MCF 10A (cell line): ENCODE measurements at regions of chr17 and their contacts with region 1.

Region 1: DNA sequence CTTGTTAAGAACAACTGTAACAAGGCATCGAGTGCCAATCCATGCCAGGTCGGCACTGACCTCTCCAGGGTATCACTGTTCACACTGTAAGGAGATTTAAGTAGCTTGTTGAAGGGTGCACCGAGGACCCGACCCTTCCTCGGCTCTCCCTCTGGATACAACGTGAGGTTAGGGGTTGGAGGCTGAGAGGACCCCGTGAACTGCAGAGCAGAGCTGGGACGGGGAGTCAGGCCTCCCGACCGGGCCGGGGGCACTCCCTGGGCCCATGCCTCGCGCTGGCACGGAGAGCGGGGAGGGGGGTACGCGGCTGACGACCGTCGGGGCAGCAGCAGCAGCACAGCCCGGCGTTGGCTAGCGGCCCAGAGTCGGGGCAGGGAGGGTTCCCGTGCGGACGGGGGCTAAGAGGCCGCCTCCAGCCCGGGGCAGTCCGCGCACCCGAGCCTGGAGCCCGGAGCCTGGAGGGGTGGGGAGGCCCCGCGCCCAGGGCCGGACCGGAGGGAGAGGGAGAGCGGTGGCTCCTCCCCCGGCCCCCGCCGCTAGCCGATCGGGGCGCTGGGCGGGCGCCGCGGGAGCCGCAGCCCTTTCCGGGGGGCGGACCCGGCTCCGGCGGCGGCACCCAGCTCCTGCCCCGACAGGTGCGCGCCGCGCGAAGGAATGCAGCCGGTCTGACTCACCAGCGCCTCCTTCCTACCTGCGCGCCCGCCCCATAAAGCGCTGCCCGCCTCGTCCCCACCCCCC is at the start of gene ITGB4:
- DNase-seq: peak; percentile 85
- H3K4me3 Mint-ChIP-seq: peak within 1 kb of the TSS; percentile 87
- H3K27ac Mint-ChIP-seq: peak within 1 kb of the TSS; percentile 78
- H3K4me1 Mint-ChIP-seq: peaks cover 6% of the 10 kb centered on the region
- H3K27me3 Mint-ChIP-seq: no peaks in the 10 kb centered on the region
- CTCF ChIP-seq: no peak
- total RNA-seq, gene ITGB4: 727 and 1,054 TPM in 2 replicates

Region 2: GRCh38 chr17:75679706-75680442 is 41.0 kb before region 1 on chr17:
- CTCF ChIA-PET with region 1: interaction called, 59 read pairs
- POLR2A ChIA-PET with region 1: interaction called, 748 read pairs
- intact Hi-C with region 1: loop called (anchors 1 kb)
- DNase-seq: peak; percentile 92
- H3K4me3 Mint-ChIP-seq: peak overlapping the region; percentile 60
- H3K27ac Mint-ChIP-seq: peak overlapping the region; percentile 91
- H3K4me1 Mint-ChIP-seq: peaks cover 40% of the 10 kb centered on the region
- H3K27me3 Mint-ChIP-seq: no peaks in the 10 kb centered on the region
- CTCF ChIP-seq: peak; percentile 60

Region 3: DNA sequence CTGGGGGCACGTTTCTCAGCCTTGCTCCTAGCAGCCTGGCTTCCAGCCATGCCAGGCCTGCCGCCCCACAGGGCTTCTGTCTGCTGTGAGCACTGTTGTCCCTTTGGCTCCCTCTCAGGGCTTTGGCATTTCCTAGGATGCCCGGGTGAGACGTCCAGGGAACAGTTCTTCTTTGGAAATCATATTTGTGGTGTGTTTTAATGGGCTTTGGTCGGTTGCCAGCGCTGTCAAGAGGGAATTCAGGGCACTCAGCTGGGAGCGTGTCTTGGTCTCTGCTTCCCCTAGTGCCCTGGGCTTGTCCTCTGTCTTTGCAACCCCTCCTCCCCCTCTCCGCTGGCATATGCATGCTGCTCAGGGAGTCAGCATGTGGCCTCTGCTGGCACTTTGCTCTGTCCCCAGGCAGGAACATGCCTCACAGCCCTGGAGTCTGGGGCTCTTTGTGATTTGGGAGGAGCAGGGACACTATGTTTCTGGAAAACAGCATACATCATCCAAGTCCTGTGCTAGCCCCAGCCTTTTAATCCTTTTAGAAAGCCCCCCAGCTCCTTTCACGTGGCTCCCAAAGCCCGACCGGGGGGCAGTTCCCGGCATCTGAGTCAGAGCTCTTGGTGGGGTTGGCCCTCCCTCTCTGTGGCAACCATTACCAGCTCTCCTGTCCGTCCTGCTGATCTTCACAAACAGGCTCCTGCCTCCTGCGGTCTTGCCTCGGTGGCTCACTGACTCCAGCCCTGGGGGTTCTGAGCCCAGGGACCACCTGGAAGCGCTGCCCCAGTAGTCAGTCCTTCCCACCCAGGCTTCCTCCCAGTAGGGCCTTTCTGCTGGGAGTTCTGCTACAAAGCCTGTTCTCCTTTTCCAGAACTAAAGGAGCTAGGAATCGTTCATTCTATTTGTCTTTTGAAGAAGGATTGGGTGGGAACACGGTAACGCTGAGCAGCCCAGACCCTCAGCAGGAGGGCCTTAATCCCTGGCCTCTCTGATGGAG is 27.1 kb before region 1 on chr17:
- CTCF ChIA-PET with region 1: interaction called, 32 read pairs
- POLR2A ChIA-PET with region 1: interaction called, 748 read pairs
- intact Hi-C with region 1: no loop called
- DNase-seq: peak; percentile 99
- H3K4me3 Mint-ChIP-seq: peak overlapping the region; percentile 28
- H3K27ac Mint-ChIP-seq: peak overlapping the region; percentile 96
- H3K4me1 Mint-ChIP-seq: peaks cover 73% of the 10 kb centered on the region
- H3K27me3 Mint-ChIP-seq: no peaks in the 10 kb centered on the region
- CTCF ChIP-seq: no peak

Region 4: GRCh38 chr17:75707131-75707571 is 13.7 kb before region 1 on chr17:
- CTCF ChIA-PET with region 1: interaction called, 4 read pairs
- POLR2A ChIA-PET with region 1: interaction called, 29 read pairs
- intact Hi-C with region 1: loop called (anchors 1 kb)
- DNase-seq: peak; percentile 94
- H3K4me3 Mint-ChIP-seq: peak overlapping the region; percentile 30
- H3K27ac Mint-ChIP-seq: peak overlapping the region; percentile 84
- H3K4me1 Mint-ChIP-seq: peaks cover 16% of the 10 kb centered on the region
- H3K27me3 Mint-ChIP-seq: no peaks in the 10 kb centered on the region
- CTCF ChIP-seq: no peak

Region 5: GRCh38 chr17:75731716-75732498 is 11.0 kb after region 1 on chr17:
- CTCF ChIA-PET with region 1: no interaction called
- POLR2A ChIA-PET with region 1: interaction called, 18 read pairs
- intact Hi-C with region 1: no loop called
- DNase-seq: no peak
- H3K4me3 Mint-ChIP-seq: no peak overlapping the region
- H3K27ac Mint-ChIP-seq: peak overlapping the region; percentile 73
- H3K4me1 Mint-ChIP-seq: no peaks in the 10 kb centered on the region
- H3K27me3 Mint-ChIP-seq: no peaks in the 10 kb centered on the region
- CTCF ChIP-seq: no peak

Region 6: DNA sequence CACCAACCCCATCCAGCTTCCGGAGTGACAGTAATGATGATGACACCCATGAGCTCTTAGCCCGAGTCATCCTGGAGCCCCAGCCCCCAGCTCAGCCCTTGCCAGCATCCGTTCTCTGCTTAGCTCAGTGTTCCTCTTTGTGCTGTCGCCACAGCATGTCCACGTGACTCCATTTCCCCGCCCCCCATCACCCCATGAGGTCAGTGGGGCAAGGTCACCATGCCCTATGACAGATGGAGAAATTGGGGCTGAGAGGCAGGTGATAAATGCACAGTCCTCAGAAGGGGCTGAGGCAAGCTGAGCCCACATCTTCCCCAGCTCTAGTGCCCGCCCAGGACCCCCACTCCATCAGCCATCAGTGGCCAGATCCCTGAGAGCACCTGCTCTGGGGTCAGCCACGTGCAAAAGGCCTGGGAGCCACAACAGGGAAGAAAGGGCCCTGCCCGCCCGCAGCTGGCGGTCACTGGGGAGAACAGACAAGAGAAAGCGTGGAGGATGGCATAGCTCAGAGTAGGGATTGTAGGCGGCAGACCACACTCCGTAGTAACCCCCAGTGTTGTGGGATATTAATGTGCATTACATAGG is 17.4 kb after region 1 on chr17:
- CTCF ChIA-PET with region 1: no interaction called
- POLR2A ChIA-PET with region 1: interaction called, 18 read pairs
- intact Hi-C with region 1: no loop called
- DNase-seq: no peak
- H3K4me3 Mint-ChIP-seq: no peak overlapping the region
- H3K27ac Mint-ChIP-seq: no peak overlapping the region
- H3K4me1 Mint-ChIP-seq: peaks cover 4% of the 10 kb centered on the region
- H3K27me3 Mint-ChIP-seq: no peaks in the 10 kb centered on the region
- CTCF ChIP-seq: no peak

Region 7: DNA sequence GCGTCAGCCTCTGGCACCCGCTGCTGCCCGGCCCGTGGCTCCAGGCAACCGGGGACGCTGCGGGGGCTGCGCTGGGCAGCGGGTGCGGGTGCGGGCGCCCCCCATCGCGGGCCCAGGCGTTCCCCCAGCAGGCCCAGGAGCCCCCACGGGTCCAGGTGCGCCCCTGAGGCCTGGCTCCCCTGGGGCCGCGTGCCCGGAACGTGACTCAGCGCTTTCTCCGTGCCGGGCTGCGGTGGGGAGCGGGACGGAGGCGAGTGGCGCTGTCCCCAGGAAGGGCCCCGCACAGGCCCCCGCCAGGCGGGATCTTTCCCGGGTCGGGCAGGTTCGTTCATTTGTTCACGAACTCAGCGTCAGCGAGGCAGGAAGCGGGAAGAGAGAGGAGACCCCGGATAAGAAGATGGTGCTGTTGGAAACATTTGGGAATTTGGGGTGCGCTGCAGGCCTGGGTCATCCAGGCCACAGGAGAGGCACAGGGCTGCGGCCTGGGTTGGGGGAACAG is 401.1 kb after region 1 on chr17:
- CTCF ChIA-PET with region 1: no interaction called
- POLR2A ChIA-PET with region 1: no interaction called
- intact Hi-C with region 1: no loop called
- DNase-seq: no peak
- H3K4me3 Mint-ChIP-seq: no peak overlapping the region
- H3K27ac Mint-ChIP-seq: no peak overlapping the region
- H3K4me1 Mint-ChIP-seq: no peaks in the 10 kb centered on the region
- H3K27me3 Mint-ChIP-seq: no peaks in the 10 kb centered on the region
- CTCF ChIP-seq: no peak